Panc1 (cell line): ENCODE measurements at regions of chr2 and their contacts with region 1.

Region 1: DNA sequence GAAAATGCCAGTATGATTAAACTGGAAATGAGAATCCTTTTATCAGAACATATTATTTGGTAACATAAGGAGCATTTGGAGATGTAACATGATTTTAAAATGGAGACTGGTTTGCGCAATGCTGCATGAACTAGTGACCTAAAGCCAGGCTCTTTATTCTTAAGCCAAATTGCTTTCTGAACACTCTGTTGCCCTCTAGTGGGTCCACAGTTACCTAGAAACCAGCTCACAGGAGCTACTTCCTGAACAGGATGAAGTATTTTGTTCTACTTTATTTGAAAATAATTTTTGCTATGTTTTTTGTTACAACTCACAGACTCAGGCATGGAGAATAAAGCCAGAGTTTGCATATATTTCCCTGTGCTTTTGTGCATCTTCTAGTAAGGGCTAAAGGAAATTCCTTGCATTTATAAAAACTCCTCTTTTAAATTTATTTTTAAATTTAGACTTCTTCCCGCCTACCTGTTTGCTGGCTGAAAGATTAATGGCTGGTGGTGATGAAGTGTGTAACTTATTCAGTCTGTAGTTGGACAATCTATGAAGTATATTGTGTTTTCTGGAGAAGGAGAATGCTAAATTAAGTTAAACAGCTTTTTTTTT is 146.7 kb downstream of the PARD3B start:
- DNase-seq: peak; percentile 32
- ATAC-seq: peak; percentile 72; the same call in 1 of the 2 replicates
- H3K4me3 ChIP-seq: no peak overlapping the region
- H3K27ac ChIP-seq: no peak overlapping the region
- H3K4me1 ChIP-seq: no peaks in the 10 kb centered on the region
- H3K27me3 ChIP-seq: no peaks in the 10 kb centered on the region
- CTCF ChIP-seq: peak; percentile 73; the same call in 1 of the 2 replicates

Region 2: DNA sequence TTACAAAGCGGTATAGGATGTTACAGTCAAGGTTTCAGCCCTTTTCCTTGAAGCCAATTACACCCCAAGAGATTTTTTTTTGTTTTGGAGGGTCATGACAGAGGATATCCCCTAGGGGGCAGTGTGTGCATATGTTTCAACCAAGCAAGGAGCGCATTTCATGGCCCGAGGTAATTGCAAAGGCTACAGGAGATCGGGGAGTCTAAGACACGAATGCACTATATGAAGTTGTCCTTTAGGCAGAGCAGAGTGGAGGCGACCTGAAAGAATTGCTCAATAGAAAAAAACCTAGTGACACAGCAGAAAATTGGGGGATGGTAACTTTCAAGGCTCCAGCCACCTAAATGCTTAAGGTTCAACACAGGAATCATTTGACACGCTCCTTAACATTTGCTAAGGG is 366.5 kb before region 1 on chr2:
- CTCF ChIA-PET with region 1: no interaction called
- POLR2A ChIA-PET with region 1: no interaction called
- in situ Hi-C with region 1: no loop called
- intact Hi-C with region 1: loop called (anchors 2 kb)
- DNase-seq: peak; percentile 47
- ATAC-seq: peak; percentile 90
- H3K4me3 ChIP-seq: no peak overlapping the region
- H3K27ac ChIP-seq: no peak overlapping the region
- H3K4me1 ChIP-seq: no peaks in the 10 kb centered on the region
- H3K27me3 ChIP-seq: no peaks in the 10 kb centered on the region
- CTCF ChIP-seq: peak; percentile 85